GM12878 (cell line): ENCODE measurements at regions of chr13 and their contacts with region 1.

Region 1: GRCh38 chr13:108322206-108322824 is 52.8 kb downstream of the TNFSF13B start:
- DNase-seq: peak; percentile 9
- ATAC-seq: peak; percentile 91
- H3K4me3 ChIP-seq: no peak overlapping the region
- H3K27ac ChIP-seq: no peak overlapping the region
- H3K4me1 ChIP-seq: no peaks in the 10 kb centered on the region
- H3K27me3 ChIP-seq: no peaks in the 10 kb centered on the region
- CTCF ChIP-seq: peak; percentile 54 to 77 (median 70)
- EP300 ChIP-seq: no peak
- POLR2A ChIP-seq: no peak
- RAD21 ChIP-seq: peak; percentile 86

Region 2: DNA sequence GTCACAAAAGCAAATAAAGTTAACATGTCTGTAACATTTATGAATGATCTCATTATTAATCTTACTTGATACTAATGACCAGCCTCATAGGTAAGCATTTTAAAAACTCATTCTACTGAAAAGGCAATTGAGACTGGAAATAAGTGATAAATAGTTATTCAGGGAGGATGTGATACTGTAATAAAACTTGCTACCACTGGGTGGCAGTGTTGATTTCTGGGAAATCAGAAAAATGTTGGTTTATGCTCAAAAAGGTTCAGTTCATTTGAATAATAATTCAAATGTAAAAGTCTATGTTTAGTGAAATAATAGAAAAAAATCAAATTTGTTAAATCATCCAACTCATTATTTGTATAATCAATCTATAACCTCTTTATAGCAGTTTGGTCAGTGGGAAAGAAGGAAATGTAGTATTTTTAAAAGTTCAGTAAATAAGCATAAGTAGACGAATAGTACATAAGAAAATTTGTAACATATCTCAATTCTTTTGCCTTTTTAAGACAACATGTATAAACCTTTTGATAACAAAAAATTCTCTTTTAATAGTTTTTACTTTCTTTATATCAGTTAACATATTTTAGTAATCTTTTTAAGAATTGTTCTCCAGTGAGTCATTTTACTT is 94.6 kb before region 1 on chr13:
- CTCF ChIA-PET with region 1: interaction called, 4 read pairs
- POLR2A ChIA-PET with region 1: no interaction called
- RAD21 ChIA-PET with region 1: interaction called, 6 read pairs
- SMC1A ChIA-PET with region 1: interaction called, 5 read pairs
- in situ Hi-C with region 1: no loop called
- intact Hi-C with region 1: loop called (anchors 2 kb)
- DNase-seq: no peak
- ATAC-seq: peak; percentile 18; the same call in 1 of the 3 replicates
- H3K4me3 ChIP-seq: no peak overlapping the region
- H3K27ac ChIP-seq: no peak overlapping the region
- H3K4me1 ChIP-seq: peaks cover 7% of the 10 kb centered on the region
- H3K27me3 ChIP-seq: no peaks in the 10 kb centered on the region
- CTCF ChIP-seq: peak; percentile 58 to 60 (median 58); a peak in 5 of 6 replicates
- EP300 ChIP-seq: no peak
- POLR2A ChIP-seq: no peak
- RAD21 ChIP-seq: peak; percentile 76

Region 3: DNA sequence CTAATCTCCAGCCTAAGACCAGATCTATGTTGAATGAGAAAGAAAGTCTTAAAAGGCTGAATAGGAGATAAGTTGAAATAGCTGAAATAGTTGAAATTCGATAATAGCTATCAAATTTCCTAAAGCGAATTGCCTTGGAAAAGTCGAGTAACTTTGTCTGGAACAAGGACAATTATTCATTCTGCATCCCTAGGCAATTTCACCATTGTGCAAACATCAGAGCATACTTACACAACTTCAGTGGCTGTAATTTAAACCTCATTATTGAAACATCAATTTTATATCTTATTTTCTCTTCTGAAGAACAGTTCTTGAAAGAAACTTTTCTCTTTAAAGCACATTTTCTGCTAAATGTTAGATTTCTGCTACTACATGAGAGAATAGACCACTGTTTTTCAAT is 39.2 kb before region 1 on chr13:
- CTCF ChIA-PET with region 1: no interaction called
- POLR2A ChIA-PET with region 1: no interaction called
- RAD21 ChIA-PET with region 1: no interaction called
- SMC1A ChIA-PET with region 1: no interaction called
- in situ Hi-C with region 1: no loop called
- intact Hi-C with region 1: no loop called
- DNase-seq: no peak
- ATAC-seq: no peak
- H3K4me3 ChIP-seq: no peak overlapping the region
- H3K27ac ChIP-seq: no peak overlapping the region
- H3K4me1 ChIP-seq: no peaks in the 10 kb centered on the region
- H3K27me3 ChIP-seq: no peaks in the 10 kb centered on the region
- CTCF ChIP-seq: no peak
- EP300 ChIP-seq: no peak
- POLR2A ChIP-seq: no peak
- RAD21 ChIP-seq: no peak

Region 4: GRCh38 chr13:108342369-108343289 is 20.3 kb after region 1 on chr13:
- CTCF ChIA-PET with region 1: interaction called, 13 read pairs
- POLR2A ChIA-PET with region 1: no interaction called
- RAD21 ChIA-PET with region 1: interaction called, 4 read pairs
- SMC1A ChIA-PET with region 1: interaction called, 5 read pairs
- in situ Hi-C with region 1: no loop called
- intact Hi-C with region 1: no loop called
- DNase-seq: peak; percentile 3
- ATAC-seq: peak; percentile 82
- H3K4me3 ChIP-seq: no peak overlapping the region
- H3K27ac ChIP-seq: no peak overlapping the region
- H3K4me1 ChIP-seq: no peaks in the 10 kb centered on the region; the same call in 1 of the 2 replicates
- H3K27me3 ChIP-seq: peaks cover 0 to 2% of the 10 kb centered on the region in 2 experiments; a peak in 1 of 4 replicates
- CTCF ChIP-seq: peak; percentile 33 to 56 (median 48); a peak in 5 of 6 replicates
- EP300 ChIP-seq: no peak
- POLR2A ChIP-seq: no peak
- RAD21 ChIP-seq: peak; percentile 30; the same call in 1 of the 2 replicates

Region 5: DNA sequence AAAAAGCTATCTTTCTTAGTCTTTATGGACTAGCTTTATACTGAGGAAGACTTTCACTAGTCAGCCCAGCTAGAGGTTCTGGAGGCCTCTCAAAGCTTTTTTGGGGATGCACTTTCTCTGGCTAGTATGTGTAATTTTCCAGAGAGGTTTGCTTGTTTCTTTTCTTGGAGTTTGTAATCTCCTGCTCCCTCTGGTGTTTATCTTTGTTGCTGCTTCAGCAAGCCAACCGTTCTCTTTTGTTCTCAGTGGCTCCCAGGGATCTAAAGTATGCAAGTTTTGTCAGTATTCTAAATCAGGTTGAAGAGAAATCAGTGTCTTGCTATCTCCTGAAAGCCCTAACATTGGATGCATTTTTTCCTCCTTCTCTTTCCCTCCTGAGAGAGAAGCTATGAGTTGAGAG is 185.9 kb after region 1 on chr13:
- CTCF ChIA-PET with region 1: interaction called, 9 read pairs
- POLR2A ChIA-PET with region 1: no interaction called
- RAD21 ChIA-PET with region 1: interaction called, 3 read pairs
- SMC1A ChIA-PET with region 1: interaction called, 11 read pairs
- in situ Hi-C with region 1: no loop called
- intact Hi-C with region 1: loop called (anchors 5 kb)
- DNase-seq: no peak
- ATAC-seq: peak; percentile 34; the same call in 1 of the 3 replicates
- H3K4me3 ChIP-seq: no peak overlapping the region
- H3K27ac ChIP-seq: no peak overlapping the region
- H3K4me1 ChIP-seq: no peaks in the 10 kb centered on the region
- H3K27me3 ChIP-seq: no peaks in the 10 kb centered on the region
- CTCF ChIP-seq: peak in 2 of 3 experiments; percentile 29 to 46; a peak in 2 of 6 replicates
- EP300 ChIP-seq: no peak
- POLR2A ChIP-seq: no peak
- RAD21 ChIP-seq: peak; percentile 23; the same call in 1 of the 2 replicates